ENCODE measurements at regions of chr14 and their contacts with region 1.

Region 1: GRCh38 chr14:89915114-89915878 is 39.2 kb downstream of the EFCAB11 start:
- DNase-seq: peak; percentile 68 to 73
- H3K4me3 ChIP-seq: no peak overlapping the region
- H3K4me1 ChIP-seq: peaks cover 28% of the 10 kb centered on the region
- H3K27me3 ChIP-seq: no peaks in the 10 kb centered on the region

Region 2: DNA sequence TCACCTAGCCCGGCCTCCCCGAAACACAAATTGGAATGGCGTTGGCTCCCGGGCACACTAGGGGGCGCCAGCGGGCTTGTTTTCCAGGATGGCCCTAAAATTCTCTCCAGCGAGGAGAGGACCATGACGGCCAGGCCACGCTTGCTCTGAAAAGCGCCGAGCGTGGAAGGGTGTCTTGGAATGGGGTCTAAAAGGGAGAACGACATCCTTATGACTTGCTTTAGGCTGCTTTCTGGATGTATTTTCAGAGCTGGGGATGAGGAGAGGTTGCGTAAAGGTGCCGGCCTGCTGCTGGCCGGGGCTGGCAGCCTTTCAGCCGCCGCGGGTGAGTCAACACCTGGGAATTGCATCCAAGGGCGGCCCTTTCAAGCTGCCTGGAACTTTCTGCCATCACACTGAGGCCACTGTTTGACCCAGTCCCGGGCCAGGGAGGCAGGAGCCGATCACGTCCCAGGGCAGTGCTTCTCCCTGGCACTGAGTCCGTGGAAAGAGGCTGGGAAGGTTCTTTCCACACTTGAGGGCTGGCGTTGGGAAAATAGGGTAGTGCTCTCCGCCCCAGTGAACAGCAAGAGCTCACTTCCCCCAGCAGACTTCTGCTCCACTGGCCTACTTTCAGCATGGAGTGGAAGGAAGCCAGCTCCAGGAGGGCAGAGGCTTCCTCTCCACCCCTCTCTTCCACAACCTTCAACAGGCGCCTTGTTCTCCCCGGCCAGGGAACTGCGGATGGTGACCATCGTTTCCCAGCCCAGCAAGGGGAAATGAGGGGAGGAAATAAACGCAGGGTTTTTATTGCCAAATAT is 874.6 kb before region 1 on chr14:
- in situ Hi-C with region 1: loop called (anchors 5 kb)
- DNase-seq: peak; percentile 83 to 95
- H3K4me3 ChIP-seq: peak overlapping the region; percentile 22
- H3K4me1 ChIP-seq: peaks cover 20% of the 10 kb centered on the region
- H3K27me3 ChIP-seq: no peaks in the 10 kb centered on the region

Region 3: GRCh38 chr14:89185919-89186855 is 729.1 kb before region 1 on chr14:
- in situ Hi-C with region 1: loop called (anchors 25 kb)
- DNase-seq: no peak
- H3K4me3 ChIP-seq: no peak overlapping the region
- H3K4me1 ChIP-seq: peaks cover 5% of the 10 kb centered on the region
- H3K27me3 ChIP-seq: no peaks in the 10 kb centered on the region

Region 4: DNA sequence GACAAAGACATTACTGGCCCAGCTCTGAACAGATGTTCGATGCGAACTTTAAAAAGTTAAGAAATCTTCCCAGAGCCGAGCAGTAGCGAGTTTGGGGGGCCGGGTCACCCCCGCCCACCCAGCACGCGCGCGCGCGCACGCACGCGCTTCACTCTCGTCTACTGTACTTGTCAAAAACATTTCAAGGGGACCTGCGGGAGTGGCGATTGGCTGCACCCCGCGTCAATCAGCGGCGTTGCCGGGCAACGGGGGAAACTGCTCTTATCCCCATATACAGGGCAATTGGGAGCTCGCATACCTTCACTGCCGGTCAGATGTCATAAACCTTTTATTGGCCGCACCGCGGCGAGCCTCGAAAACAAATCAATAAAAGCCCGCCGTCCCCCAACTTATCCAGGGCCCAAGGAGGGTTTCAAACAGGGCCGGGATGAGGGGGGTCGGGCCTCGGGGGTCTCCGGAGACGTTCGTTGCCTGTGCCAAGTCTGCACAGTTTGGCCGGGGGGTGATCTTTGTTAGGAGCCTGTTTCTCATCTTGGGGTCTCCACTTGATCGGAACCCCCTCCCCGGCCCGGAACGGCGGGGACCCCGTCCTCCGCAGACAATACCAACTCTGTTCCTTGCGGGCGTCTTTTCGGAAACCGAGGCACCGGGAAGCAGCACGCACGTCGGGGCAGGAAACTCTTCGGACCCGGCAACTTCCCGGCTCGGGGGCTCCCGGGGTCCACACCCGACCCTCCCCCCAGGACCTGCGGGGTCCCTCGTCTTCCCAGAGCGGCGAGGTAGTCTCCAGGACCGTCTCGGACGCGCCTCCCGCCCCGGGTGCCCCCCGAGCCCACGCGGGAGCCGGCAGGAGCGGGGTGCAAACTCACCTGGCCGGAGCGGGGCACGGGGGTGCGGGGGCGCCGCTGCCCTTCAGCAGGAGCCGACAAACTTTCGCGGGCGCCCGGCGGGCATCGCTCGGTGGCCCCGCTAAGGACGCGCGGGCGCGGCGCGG is 499.0 kb before region 1 on chr14:
- in situ Hi-C with region 1: loop called (anchors 25 kb)
- DNase-seq: peak; percentile 92 to 99
- H3K4me3 ChIP-seq: peak overlapping the region; percentile 83
- H3K4me1 ChIP-seq: peaks cover 16% of the 10 kb centered on the region
- H3K27me3 ChIP-seq: no peaks in the 10 kb centered on the region

Region 5: GRCh38 chr14:89625244-89625713 is 290.0 kb before region 1 on chr14:
- in situ Hi-C with region 1: loop called (anchors 10 kb)
- DNase-seq: peak in 1 of 2 experiments; percentile 50
- H3K4me3 ChIP-seq: no peak overlapping the region
- H3K4me1 ChIP-seq: peaks cover 31% of the 10 kb centered on the region
- H3K27me3 ChIP-seq: no peaks in the 10 kb centered on the region